ENCODE measurements at regions of chr6 and their contacts with region 1.

Region 1: GRCh38 chr6:52419809-52420670 is at the start of gene EFHC1:
- DNase-seq: peak; percentile 75
- H3K4me3 ChIP-seq: peak within 1 kb of the TSS; percentile 41 to 92 (median 83)
- H3K27ac ChIP-seq: peak within 1 kb of the TSS; percentile 84 to 92 (median 90)
- H3K4me1 ChIP-seq: peaks cover 6 to 51% (median 25%) of the 10 kb centered on the region in 3 donors
- H3K27me3 ChIP-seq: no peaks in the 10 kb centered on the region
- CTCF ChIP-seq: no peak
- POLR2A ChIP-seq: peak in 3 of 4 donors; percentile 67 to 88 (median 73)
- total RNA-seq, gene EFHC1: 4.0 to 17.5 (median 9.9) TPM

Region 2: GRCh38 chr6:52286798-52287432 is 133.1 kb before region 1 on chr6:
- intact Hi-C with region 1: no loop called
- DNase-seq: no peak
- H3K4me3 ChIP-seq: no peak overlapping the region
- H3K27ac ChIP-seq: no peak overlapping the region
- H3K4me1 ChIP-seq: peaks cover 0 to 33% (median 12%) of the 10 kb centered on the region in 3 donors
- H3K27me3 ChIP-seq: no peaks in the 10 kb centered on the region
- CTCF ChIP-seq: peak in 5 of 6 experiments; percentile 48 to 70 (median 59)
- POLR2A ChIP-seq: no peak

Region 3: DNA sequence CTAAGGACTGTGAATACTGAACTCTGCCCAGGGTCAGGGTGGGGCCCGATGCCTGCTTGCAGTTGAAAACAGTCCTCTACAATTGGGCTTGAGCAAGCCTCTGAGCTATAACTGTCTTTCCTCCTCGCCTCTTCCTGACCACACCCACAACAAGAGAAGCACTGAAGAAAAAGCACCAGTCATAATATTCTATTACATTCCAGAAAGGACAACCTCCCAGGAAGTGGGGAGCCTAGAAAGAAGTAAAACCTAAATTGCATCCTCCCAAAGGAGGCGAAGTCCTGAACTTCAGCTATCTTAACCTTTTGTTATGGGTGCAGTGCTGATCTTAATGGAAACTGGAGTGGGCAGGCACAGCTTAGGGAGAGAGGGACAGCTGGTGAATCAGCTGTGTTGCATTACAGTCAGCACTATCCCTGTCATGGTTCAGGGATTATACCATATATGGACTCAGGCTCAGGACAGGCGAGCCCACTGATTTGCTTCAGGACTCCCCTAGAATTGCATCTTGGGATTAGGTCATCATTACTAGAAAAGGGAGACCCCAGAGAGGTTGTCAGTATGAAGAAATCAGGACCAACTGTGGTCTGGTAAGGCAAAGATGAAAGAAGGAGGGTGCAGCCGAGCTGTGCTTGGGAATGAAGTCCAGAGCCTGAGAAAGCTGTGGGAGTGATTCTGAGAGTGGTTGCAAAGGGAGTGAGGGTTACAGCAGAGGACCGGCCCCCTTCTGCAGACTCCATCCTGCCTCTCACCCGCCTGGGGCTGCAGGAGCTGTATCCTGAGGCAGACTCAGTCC is 175.2 kb after region 1 on chr6:
- intact Hi-C with region 1: loop called (anchors 5 kb)
- DNase-seq: no peak
- H3K4me3 ChIP-seq: peak overlapping the region in 1 of 4 donors; percentile 32
- H3K27ac ChIP-seq: peak overlapping the region; percentile 9 to 78 (median 68)
- H3K4me1 ChIP-seq: peaks cover 0 to 43% (median 30%) of the 10 kb centered on the region in 3 donors
- H3K27me3 ChIP-seq: no peaks in the 10 kb centered on the region
- CTCF ChIP-seq: no peak
- POLR2A ChIP-seq: no peak

Region 4: GRCh38 chr6:52664186-52664990 is 244.3 kb after region 1 on chr6:
- intact Hi-C with region 1: loop called (anchors 5 kb)
- DNase-seq: peak; percentile 48
- H3K4me3 ChIP-seq: peak overlapping the region; percentile 60 to 86 (median 73)
- H3K27ac ChIP-seq: peak overlapping the region; percentile 80 to 86 (median 82)
- H3K4me1 ChIP-seq: peaks cover 8 to 39% (median 19%) of the 10 kb centered on the region in 3 donors
- H3K27me3 ChIP-seq: no peaks in the 10 kb centered on the region
- CTCF ChIP-seq: no peak
- POLR2A ChIP-seq: peak in 3 of 4 donors; percentile 57 to 88 (median 74)

Region 5: DNA sequence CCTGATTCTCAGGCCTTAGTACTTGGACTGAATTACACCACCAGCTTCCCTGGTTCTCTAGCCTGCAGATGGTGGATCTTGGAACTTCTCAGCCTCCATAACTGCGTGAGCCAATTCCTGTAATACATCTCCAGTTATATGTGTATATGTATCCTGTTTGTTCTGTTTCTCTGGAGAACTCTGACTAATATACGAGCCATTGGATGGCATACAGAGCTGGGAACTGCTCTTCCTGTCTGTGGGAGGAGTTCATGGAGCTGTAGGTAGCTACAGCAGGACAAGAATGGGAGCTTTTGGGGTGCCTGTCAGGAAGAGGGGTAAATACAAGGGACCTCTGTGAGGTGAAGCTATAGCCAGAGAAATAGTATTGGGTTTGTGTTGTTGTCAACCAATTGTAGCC is 292.1 kb after region 1 on chr6:
- intact Hi-C with region 1: no loop called
- DNase-seq: no peak
- H3K4me3 ChIP-seq: no peak overlapping the region
- H3K27ac ChIP-seq: no peak overlapping the region
- H3K4me1 ChIP-seq: peaks cover 0 to 3% (median 0%) of the 10 kb centered on the region in 3 donors
- H3K27me3 ChIP-seq: no peaks in the 10 kb centered on the region
- CTCF ChIP-seq: no peak
- POLR2A ChIP-seq: no peak

Region 6: GRCh38 chr6:52731719-52732118 is 311.7 kb after region 1 on chr6:
- intact Hi-C with region 1: no loop called
- DNase-seq: no peak
- H3K4me3 ChIP-seq: no peak overlapping the region
- H3K27ac ChIP-seq: no peak overlapping the region
- H3K4me1 ChIP-seq: peaks cover 0 to 6% (median 5%) of the 10 kb centered on the region in 3 donors
- H3K27me3 ChIP-seq: no peaks in the 10 kb centered on the region
- CTCF ChIP-seq: no peak
- POLR2A ChIP-seq: no peak

Measured in esophagus squamous epithelium (tissue), 5 donors.